A549 (cell line): ENCODE measurements at regions of chr14 and their contacts with region 1.

Region 1: GRCh38 chr14:64671591-64671990 is 32.6 kb upstream of the PLEKHG3 start:
- DNase-seq: peak; percentile 72 to 80
- ATAC-seq: peak; percentile 74 to 87; a peak in 5 of 6 replicates
- H3K4me3 ChIP-seq: no peak overlapping the region
- H3K27ac ChIP-seq: peak overlapping the region; percentile 75 to 79
- H3K4me1 ChIP-seq: peaks cover 37% of the 10 kb centered on the region
- CTCF ChIP-seq: peak; percentile 87
- EP300 ChIP-seq: no peak
- POLR2A ChIP-seq: no peak
- RAD21 ChIP-seq: peak; percentile 94

Region 2: GRCh38 chr14:64681796-64682710 is 10.5 kb after region 1 on chr14:
- CTCF ChIA-PET with region 1: interaction called, 18 read pairs
- POLR2A ChIA-PET with region 1: no interaction called
- DNase-seq: peak in 1 of 2 experiments; percentile 56
- ATAC-seq: peak; percentile 19 to 64; a peak in 3 of 6 replicates
- H3K4me3 ChIP-seq: no peak overlapping the region
- H3K27ac ChIP-seq: peak overlapping the region; percentile 64 to 85
- H3K4me1 ChIP-seq: peaks cover 28% of the 10 kb centered on the region
- CTCF ChIP-seq: no peak
- EP300 ChIP-seq: no peak
- POLR2A ChIP-seq: no peak
- RAD21 ChIP-seq: no peak

Region 3: GRCh38 chr14:64704143-64704742 is 32.7 kb after region 1 on chr14 and contains the start of gene PLEKHG3:
- CTCF ChIA-PET with region 1: interaction called, 28 read pairs
- POLR2A ChIA-PET with region 1: no interaction called
- DNase-seq: peak; percentile 79 to 84
- ATAC-seq: peak; percentile 72 to 83
- H3K4me3 ChIP-seq: peak within 1 kb of the TSS; percentile 72
- H3K27ac ChIP-seq: peak within 1 kb of the TSS; percentile 90 to 95
- H3K4me1 ChIP-seq: peaks cover 58% of the 10 kb centered on the region
- CTCF ChIP-seq: no peak
- EP300 ChIP-seq: no peak
- POLR2A ChIP-seq: no peak; the same call in 1 of the 2 replicates
- RAD21 ChIP-seq: 0 out of 5 replicates have a peak, but pooled peaks of 1 of the 2 experiments have one; percentile 22
- polyA plus RNA-seq, gene PLEKHG3: 29.8 and 30.5 TPM in 2 replicates

Region 4: GRCh38 chr14:64726585-64726890 is 54.9 kb after region 1 on chr14:
- CTCF ChIA-PET with region 1: interaction called, 10 read pairs
- POLR2A ChIA-PET with region 1: no interaction called
- DNase-seq: peak; percentile 52 to 82
- ATAC-seq: peak; percentile 83 to 87
- H3K4me3 ChIP-seq: no peak overlapping the region
- H3K27ac ChIP-seq: peak overlapping the region; percentile 81 to 84
- H3K4me1 ChIP-seq: peaks cover 62% of the 10 kb centered on the region
- CTCF ChIP-seq: no peak
- EP300 ChIP-seq: no peak
- POLR2A ChIP-seq: no peak
- RAD21 ChIP-seq: no peak